Activated CD8-positive, alpha-beta T cell treated with anti-CD3 and anti-CD28 coated beads, Interleukin-2, amount 10 ng/mL, durations not matched to agents 7 days and 5 days (primary cell): ENCODE measurements at regions of chr10 and their contacts with region 1.

Region 1: DNA sequence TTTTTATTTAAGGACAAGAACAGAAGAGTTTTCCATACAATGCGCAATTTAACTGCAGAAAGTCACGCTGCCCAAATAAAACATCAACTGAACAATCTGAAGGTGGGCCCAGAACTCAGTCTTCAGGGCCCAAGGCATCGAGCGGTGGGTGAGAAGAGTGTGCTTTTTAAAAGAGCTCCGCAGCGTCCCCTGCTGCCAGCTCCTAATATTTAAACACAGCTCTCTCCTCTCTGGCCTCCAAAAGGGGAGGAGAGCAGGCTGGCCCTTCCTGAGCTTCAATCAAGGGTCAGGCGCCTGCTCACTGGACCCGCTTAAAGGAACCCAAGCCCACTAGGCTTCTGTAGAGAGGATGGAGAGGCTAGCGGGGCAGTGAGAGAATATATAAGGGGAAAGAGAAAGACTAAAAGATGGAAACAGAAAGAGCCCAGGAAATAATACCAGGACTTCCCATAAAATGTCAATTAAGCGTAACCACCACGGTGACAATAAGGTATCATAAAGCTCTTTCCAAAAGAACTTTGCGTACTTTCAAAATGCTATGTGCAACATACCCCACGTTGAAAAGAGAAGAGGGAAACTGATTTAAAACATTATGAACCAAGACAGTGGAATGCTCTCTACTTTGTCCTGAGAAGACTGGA is 2.8 kb downstream of the FAM53B start:
- DNase-seq: peak; percentile 84
- ATAC-seq: peak; percentile 61
- H3K4me3 Mint-ChIP-seq: peak overlapping the region; percentile 58
- H3K27ac Mint-ChIP-seq: peak overlapping the region; percentile 33
- H3K4me1 Mint-ChIP-seq: peaks cover 69% of the 10 kb centered on the region
- H3K27me3 Mint-ChIP-seq: peaks cover 6% of the 10 kb centered on the region

Region 2: GRCh38 chr10:124530215-124530665 is 211.2 kb before region 1 on chr10:
- CTCF ChIA-PET with region 1: interaction called, 34 read pairs
- POLR2A ChIA-PET with region 1: interaction called, 3 read pairs
- DNase-seq: peak; percentile 89
- ATAC-seq: peak; percentile 97
- H3K4me3 Mint-ChIP-seq: no peak overlapping the region
- H3K27ac Mint-ChIP-seq: no peak overlapping the region
- H3K4me1 Mint-ChIP-seq: peaks cover 12% of the 10 kb centered on the region
- H3K27me3 Mint-ChIP-seq: no peaks in the 10 kb centered on the region

Region 3: GRCh38 chr10:124626759-124627380 is 114.5 kb before region 1 on chr10:
- CTCF ChIA-PET with region 1: interaction called, 20 read pairs
- POLR2A ChIA-PET with region 1: interaction called, 3 read pairs
- DNase-seq: peak; percentile 63
- ATAC-seq: peak; percentile 75
- H3K4me3 Mint-ChIP-seq: peak overlapping the region; percentile 31
- H3K27ac Mint-ChIP-seq: peak overlapping the region; percentile 70
- H3K4me1 Mint-ChIP-seq: peaks cover 40% of the 10 kb centered on the region
- H3K27me3 Mint-ChIP-seq: no peaks in the 10 kb centered on the region

Region 4: GRCh38 chr10:124671486-124672075 is 69.8 kb before region 1 on chr10:
- CTCF ChIA-PET with region 1: interaction called, 11 read pairs
- POLR2A ChIA-PET with region 1: no interaction called
- DNase-seq: no peak
- ATAC-seq: no peak
- H3K4me3 Mint-ChIP-seq: no peak overlapping the region
- H3K27ac Mint-ChIP-seq: peak overlapping the region; percentile 65
- H3K4me1 Mint-ChIP-seq: peaks cover 42% of the 10 kb centered on the region
- H3K27me3 Mint-ChIP-seq: no peaks in the 10 kb centered on the region

Region 5: GRCh38 chr10:124697830-124698544 is 43.4 kb before region 1 on chr10:
- CTCF ChIA-PET with region 1: interaction called, 29 read pairs
- POLR2A ChIA-PET with region 1: interaction called, 6 read pairs
- DNase-seq: peak; percentile 42
- ATAC-seq: peak; percentile 24
- H3K4me3 Mint-ChIP-seq: peak overlapping the region; percentile 6
- H3K27ac Mint-ChIP-seq: peak overlapping the region; percentile 92
- H3K4me1 Mint-ChIP-seq: peaks cover 94% of the 10 kb centered on the region
- H3K27me3 Mint-ChIP-seq: no peaks in the 10 kb centered on the region

Region 6: GRCh38 chr10:124719213-124719851 is 22.1 kb before region 1 on chr10:
- CTCF ChIA-PET with region 1: interaction called, 180 read pairs
- POLR2A ChIA-PET with region 1: interaction called, 6 read pairs
- DNase-seq: peak; percentile 81
- ATAC-seq: peak; percentile 67
- H3K4me3 Mint-ChIP-seq: peak overlapping the region; percentile 71
- H3K27ac Mint-ChIP-seq: peak overlapping the region; percentile 84
- H3K4me1 Mint-ChIP-seq: peaks cover 87% of the 10 kb centered on the region
- H3K27me3 Mint-ChIP-seq: no peaks in the 10 kb centered on the region

Region 7: GRCh38 chr10:124898471-124898870 is 157.1 kb after region 1 on chr10:
- CTCF ChIA-PET with region 1: no interaction called
- POLR2A ChIA-PET with region 1: no interaction called
- DNase-seq: no peak
- ATAC-seq: no peak
- H3K4me3 Mint-ChIP-seq: no peak overlapping the region
- H3K27ac Mint-ChIP-seq: no peak overlapping the region
- H3K4me1 Mint-ChIP-seq: no peaks in the 10 kb centered on the region
- H3K27me3 Mint-ChIP-seq: peaks cover 15% of the 10 kb centered on the region